CD8-positive, alpha-beta T cell (primary cell): ENCODE measurements at regions of chr1 and their contacts with region 1.

Region 1: DNA sequence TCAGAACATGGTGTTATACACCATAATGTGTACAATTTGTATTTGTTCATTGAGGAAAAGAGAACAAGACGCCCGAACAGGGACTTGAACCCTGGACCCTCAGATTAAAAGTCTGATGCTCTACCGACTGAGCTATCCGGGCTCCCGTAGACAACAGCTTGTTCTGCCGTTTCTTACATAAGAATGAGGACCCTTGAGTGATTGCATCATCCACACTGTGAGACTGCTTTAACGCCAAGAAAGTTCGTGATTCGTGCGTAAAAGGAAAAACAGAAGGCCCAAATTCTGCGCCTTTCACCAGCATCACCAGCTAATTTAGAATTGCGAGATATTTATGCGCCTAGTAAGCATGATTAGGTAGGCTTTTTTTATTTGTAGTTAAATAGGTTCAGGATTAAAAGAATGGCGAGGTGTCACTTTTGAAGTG is 9.2 kb upstream of the MDM4 start:
- DNase-seq: peak; percentile 73 to 97 (median 85)
- ATAC-seq: peak; percentile 73
- H3K4me3 ChIP-seq: peak overlapping the region; percentile 39 to 64
- H3K4me3 Mint-ChIP-seq: peak overlapping the region; percentile 86
- H3K27ac ChIP-seq: peak overlapping the region; percentile 84 to 96
- H3K27ac Mint-ChIP-seq: peak overlapping the region; percentile 97
- H3K4me1 ChIP-seq: peaks cover 15% of the 10 kb centered on the region
- H3K4me1 Mint-ChIP-seq: peaks cover 33% of the 10 kb centered on the region
- H3K27me3 ChIP-seq: no peaks in the 10 kb centered on the region
- H3K27me3 Mint-ChIP-seq: no peaks in the 10 kb centered on the region
- CTCF ChIP-seq: no peak

Region 2: DNA sequence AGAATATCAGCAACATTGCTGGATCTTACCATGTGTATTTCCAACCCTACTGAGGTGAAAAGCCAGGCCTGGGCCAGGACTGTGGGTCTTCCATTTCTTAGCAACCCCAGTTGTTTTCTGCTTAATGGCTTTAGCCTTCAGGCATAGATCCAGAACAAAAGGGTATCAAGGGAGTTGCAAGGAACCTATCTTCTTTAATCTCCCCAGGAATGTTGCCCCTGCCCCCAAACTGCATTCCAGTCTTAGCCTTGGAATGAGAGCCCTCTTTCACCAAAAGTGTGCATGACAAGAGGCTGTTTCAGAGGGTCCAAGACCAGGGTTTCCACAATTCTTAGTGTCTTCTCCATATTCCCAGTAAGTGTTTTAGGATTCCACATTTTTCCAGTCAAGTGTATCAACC is 521.9 kb before region 1 on chr1:
- CTCF ChIA-PET with region 1: no interaction called
- POLR2A ChIA-PET with region 1: no interaction called
- intact Hi-C with region 1: no loop called
- DNase-seq: no peak
- ATAC-seq: no peak
- H3K4me3 ChIP-seq: no peak overlapping the region
- H3K4me3 Mint-ChIP-seq: no peak overlapping the region
- H3K27ac ChIP-seq: no peak overlapping the region
- H3K27ac Mint-ChIP-seq: no peak overlapping the region
- H3K4me1 ChIP-seq: no peaks in the 10 kb centered on the region
- H3K4me1 Mint-ChIP-seq: no peaks in the 10 kb centered on the region
- H3K27me3 ChIP-seq: no peaks in the 10 kb centered on the region
- H3K27me3 Mint-ChIP-seq: peaks cover 8% of the 10 kb centered on the region
- CTCF ChIP-seq: no peak

Region 3: GRCh38 chr1:204431310-204432165 is 75.4 kb before region 1 on chr1:
- CTCF ChIA-PET with region 1: interaction called, 1,205 read pairs
- POLR2A ChIA-PET with region 1: no interaction called
- intact Hi-C with region 1: loop called (anchors 1 kb)
- DNase-seq: peak; percentile 65 to 87 (median 80)
- ATAC-seq: peak; percentile 77
- H3K4me3 ChIP-seq: no peak overlapping the region
- H3K4me3 Mint-ChIP-seq: no peak overlapping the region
- H3K27ac ChIP-seq: no peak overlapping the region
- H3K27ac Mint-ChIP-seq: no peak overlapping the region
- H3K4me1 ChIP-seq: no peaks in the 10 kb centered on the region
- H3K4me1 Mint-ChIP-seq: no peaks in the 10 kb centered on the region
- H3K27me3 ChIP-seq: no peaks in the 10 kb centered on the region
- H3K27me3 Mint-ChIP-seq: no peaks in the 10 kb centered on the region
- CTCF ChIP-seq: peak; percentile 97

Region 4: GRCh38 chr1:204480515-204480914 is 26.5 kb before region 1 on chr1:
- CTCF ChIA-PET with region 1: interaction called, 33 read pairs
- POLR2A ChIA-PET with region 1: no interaction called
- intact Hi-C with region 1: loop called in 1 of 2 experiments (anchors 2 kb)
- DNase-seq: no peak
- ATAC-seq: peak; percentile 48
- H3K4me3 ChIP-seq: no peak overlapping the region
- H3K4me3 Mint-ChIP-seq: no peak overlapping the region
- H3K27ac ChIP-seq: no peak overlapping the region
- H3K27ac Mint-ChIP-seq: no peak overlapping the region
- H3K4me1 ChIP-seq: peaks cover 31% of the 10 kb centered on the region
- H3K4me1 Mint-ChIP-seq: peaks cover 69% of the 10 kb centered on the region
- H3K27me3 ChIP-seq: no peaks in the 10 kb centered on the region
- H3K27me3 Mint-ChIP-seq: no peaks in the 10 kb centered on the region
- CTCF ChIP-seq: no peak

Region 5: DNA sequence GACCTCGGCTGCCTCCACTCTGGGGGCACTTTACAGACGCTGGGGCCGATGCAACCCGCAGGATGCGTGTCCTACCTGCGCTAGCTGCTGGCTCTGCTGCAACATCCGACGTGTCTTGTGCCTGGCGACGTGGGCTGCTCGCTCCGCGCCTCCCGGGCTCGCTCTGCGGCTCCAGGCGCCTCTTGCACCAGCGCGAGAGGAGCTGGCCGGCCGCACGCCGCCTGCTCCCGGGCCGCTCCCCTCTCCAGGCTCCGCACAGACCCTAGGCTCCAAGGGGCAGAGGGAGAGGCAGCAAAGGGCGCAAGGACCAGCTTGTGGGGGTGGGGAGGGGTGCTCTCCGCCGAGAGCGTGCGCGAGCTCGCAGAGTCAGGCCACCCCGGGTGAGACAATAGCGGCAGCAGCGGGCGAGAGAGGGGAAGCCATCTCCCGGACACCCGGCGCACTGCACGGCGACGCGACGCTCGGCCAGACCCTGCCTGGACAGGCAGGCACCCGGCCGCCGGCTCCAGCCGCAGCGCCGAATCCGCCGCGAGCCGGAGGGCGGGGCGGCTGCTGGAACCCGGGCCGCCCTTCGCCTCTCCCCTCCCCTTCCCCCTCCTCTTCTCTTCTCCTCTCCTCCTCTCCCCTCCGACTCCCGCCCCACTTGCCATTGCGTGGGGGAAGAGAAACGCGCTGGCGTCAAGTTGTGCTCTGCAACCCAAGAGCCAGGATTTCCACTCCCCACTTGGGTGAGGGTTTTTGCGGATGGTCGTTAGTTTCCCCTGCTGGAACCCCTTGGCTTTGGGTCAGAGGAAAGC is 12.5 kb before region 1 on chr1 and contains the start of gene PIK3C2B:
- CTCF ChIA-PET with region 1: interaction called, 83 read pairs
- POLR2A ChIA-PET with region 1: interaction called, 38 read pairs
- intact Hi-C with region 1: loop called in 1 of 2 experiments (anchors 1 kb)
- DNase-seq: peak; percentile 29 to 86 (median 69)
- ATAC-seq: peak; percentile 69
- H3K4me3 ChIP-seq: peak within 1 kb of the TSS; percentile 64 to 86
- H3K4me3 Mint-ChIP-seq: peak within 1 kb of the TSS; percentile 94
- H3K27ac ChIP-seq: peak within 1 kb of the TSS; percentile 63 to 72
- H3K27ac Mint-ChIP-seq: peak within 1 kb of the TSS; percentile 96
- H3K4me1 ChIP-seq: peaks cover 29% of the 10 kb centered on the region
- H3K4me1 Mint-ChIP-seq: peaks cover 52% of the 10 kb centered on the region
- H3K27me3 ChIP-seq: no peaks in the 10 kb centered on the region
- H3K27me3 Mint-ChIP-seq: no peaks in the 10 kb centered on the region
- CTCF ChIP-seq: no peak
- total RNA-seq, gene PIK3C2B: 32.2 to 32.6 TPM

Region 6: GRCh38 chr1:204556458-204557052 is 49.6 kb after region 1 on chr1:
- CTCF ChIA-PET with region 1: interaction called, 4 read pairs
- POLR2A ChIA-PET with region 1: interaction called, 3 read pairs
- intact Hi-C with region 1: loop called in 1 of 2 experiments (anchors 2 kb)
- DNase-seq: peak in 2 of 9 experiments; percentile 8 to 53
- ATAC-seq: peak; percentile 72
- H3K4me3 ChIP-seq: no peak overlapping the region
- H3K4me3 Mint-ChIP-seq: peak overlapping the region; percentile 20
- H3K27ac ChIP-seq: peak overlapping the region in 1 of 2 experiments; percentile 28
- H3K27ac Mint-ChIP-seq: peak overlapping the region; percentile 84
- H3K4me1 ChIP-seq: peaks cover 18% of the 10 kb centered on the region
- H3K4me1 Mint-ChIP-seq: peaks cover 45% of the 10 kb centered on the region
- H3K27me3 ChIP-seq: no peaks in the 10 kb centered on the region
- H3K27me3 Mint-ChIP-seq: no peaks in the 10 kb centered on the region
- CTCF ChIP-seq: no peak